ENCODE measurements at regions of chr7 and their contacts with region 1.

Region 1: GRCh38 chr7:17769918-17770317 is 170.4 kb downstream of the SNX13 start:
- DNase-seq: peak; percentile 64
- H3K4me3 ChIP-seq: no peak overlapping the region
- H3K27ac ChIP-seq: no peak overlapping the region
- H3K4me1 ChIP-seq: no peaks in the 10 kb centered on the region
- H3K27me3 ChIP-seq: no peaks in the 10 kb centered on the region
- CTCF ChIP-seq: peak; percentile 71 to 75
- POLR2A ChIP-seq: no peak

Region 2: DNA sequence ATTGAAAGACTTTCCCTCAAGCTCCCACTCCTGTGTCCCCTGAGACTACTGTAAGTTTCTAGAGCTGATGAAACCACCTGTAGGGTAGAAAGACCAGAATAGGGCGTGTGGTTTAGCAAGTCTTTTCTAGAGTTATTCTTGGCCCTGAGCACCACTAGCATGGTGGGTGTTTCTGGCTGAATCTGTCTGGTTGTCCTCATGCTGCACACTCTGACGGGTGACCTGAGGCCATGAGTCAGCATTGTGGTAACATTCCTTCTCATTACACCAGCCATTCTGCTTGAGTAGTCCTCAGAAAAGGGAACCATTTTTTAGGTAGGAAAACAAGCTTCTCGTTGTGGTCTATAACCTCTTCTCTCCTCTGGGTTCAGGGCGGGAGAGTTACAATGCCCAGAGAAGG is 79.9 kb before region 1 on chr7:
- CTCF ChIA-PET with region 1: no interaction called
- POLR2A ChIA-PET with region 1: no interaction called
- dilution Hi-C with region 1: no loop called
- intact Hi-C with region 1: no loop called
- DNase-seq: no peak
- H3K4me3 ChIP-seq: no peak overlapping the region
- H3K27ac ChIP-seq: no peak overlapping the region
- H3K4me1 ChIP-seq: no peaks in the 10 kb centered on the region
- H3K27me3 ChIP-seq: no peaks in the 10 kb centered on the region
- CTCF ChIP-seq: no peak
- POLR2A ChIP-seq: no peak

Region 3: DNA sequence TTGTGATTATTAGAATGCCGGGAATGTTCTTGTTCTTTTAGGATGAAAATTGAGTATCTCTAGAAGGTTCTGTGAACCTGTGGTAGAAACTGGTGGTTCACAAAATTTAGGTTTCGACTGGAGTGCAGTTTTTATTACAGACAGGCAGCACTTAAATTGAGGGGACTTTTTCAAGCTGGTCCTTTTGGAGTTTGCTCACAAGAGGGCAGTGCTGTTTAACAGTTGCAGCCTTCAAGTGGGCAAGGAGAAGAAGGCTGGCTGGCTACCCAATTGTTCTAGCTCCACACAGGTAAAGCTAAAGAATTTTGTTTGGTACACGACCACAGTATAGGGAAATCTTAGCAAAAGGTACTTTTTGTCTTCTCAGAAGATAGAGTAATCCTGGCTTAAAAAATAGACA is 63.2 kb before region 1 on chr7:
- CTCF ChIA-PET with region 1: interaction called, 27 read pairs
- POLR2A ChIA-PET with region 1: no interaction called
- dilution Hi-C with region 1: no loop called
- intact Hi-C with region 1: loop called (anchors 1 kb)
- DNase-seq: peak; percentile 74
- H3K4me3 ChIP-seq: no peak overlapping the region
- H3K27ac ChIP-seq: no peak overlapping the region
- H3K4me1 ChIP-seq: no peaks in the 10 kb centered on the region
- H3K27me3 ChIP-seq: peaks cover 3 to 6% of the 10 kb centered on the region in 2 experiments
- CTCF ChIP-seq: peak; percentile 48 to 64
- POLR2A ChIP-seq: no peak

Region 4: DNA sequence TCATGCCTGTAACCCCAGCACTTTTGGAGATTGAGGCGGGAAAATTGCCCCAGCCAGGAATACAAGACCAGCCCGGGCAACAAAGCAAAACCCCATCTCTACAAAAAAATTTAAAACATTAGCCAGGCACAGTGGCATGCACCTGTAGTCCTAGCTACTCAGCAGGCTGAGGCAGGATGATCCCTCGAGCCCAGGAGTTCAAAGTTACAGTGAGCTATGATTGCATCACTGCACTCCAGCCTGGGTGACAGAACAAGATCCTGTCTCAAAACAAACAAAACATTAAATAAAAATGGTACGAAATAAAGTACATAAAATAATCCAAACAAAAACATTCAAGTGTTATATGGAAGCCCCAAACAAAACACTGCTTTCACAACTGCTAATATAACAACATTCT is 45.4 kb after region 1 on chr7:
- CTCF ChIA-PET with region 1: interaction called, 12 read pairs
- POLR2A ChIA-PET with region 1: no interaction called
- dilution Hi-C with region 1: no loop called
- intact Hi-C with region 1: no loop called
- DNase-seq: no peak
- H3K4me3 ChIP-seq: no peak overlapping the region
- H3K27ac ChIP-seq: no peak overlapping the region
- H3K4me1 ChIP-seq: no peaks in the 10 kb centered on the region
- H3K27me3 ChIP-seq: no peaks in the 10 kb centered on the region
- CTCF ChIP-seq: no peak
- POLR2A ChIP-seq: no peak

Region 5: GRCh38 chr7:17946591-17946990 is 176.7 kb after region 1 on chr7:
- CTCF ChIA-PET with region 1: interaction called, 16 read pairs
- POLR2A ChIA-PET with region 1: no interaction called
- dilution Hi-C with region 1: no loop called
- intact Hi-C with region 1: no loop called
- DNase-seq: no peak
- H3K4me3 ChIP-seq: peak overlapping the region in 1 of 3 experiments; percentile 16
- H3K27ac ChIP-seq: no peak overlapping the region
- H3K4me1 ChIP-seq: no peaks in the 10 kb centered on the region
- H3K27me3 ChIP-seq: no peaks in the 10 kb centered on the region
- CTCF ChIP-seq: no peak
- POLR2A ChIP-seq: no peak

Region 6: GRCh38 chr7:18064242-18064838 is 294.4 kb after region 1 on chr7:
- CTCF ChIA-PET with region 1: interaction called, 10 read pairs
- POLR2A ChIA-PET with region 1: no interaction called
- dilution Hi-C with region 1: no loop called
- intact Hi-C with region 1: no loop called
- DNase-seq: peak; percentile 6
- H3K4me3 ChIP-seq: no peak overlapping the region
- H3K27ac ChIP-seq: no peak overlapping the region
- H3K4me1 ChIP-seq: no peaks in the 10 kb centered on the region
- H3K27me3 ChIP-seq: no peaks in the 10 kb centered on the region
- CTCF ChIP-seq: peak; percentile 43 to 49
- POLR2A ChIP-seq: no peak

Region 7: DNA sequence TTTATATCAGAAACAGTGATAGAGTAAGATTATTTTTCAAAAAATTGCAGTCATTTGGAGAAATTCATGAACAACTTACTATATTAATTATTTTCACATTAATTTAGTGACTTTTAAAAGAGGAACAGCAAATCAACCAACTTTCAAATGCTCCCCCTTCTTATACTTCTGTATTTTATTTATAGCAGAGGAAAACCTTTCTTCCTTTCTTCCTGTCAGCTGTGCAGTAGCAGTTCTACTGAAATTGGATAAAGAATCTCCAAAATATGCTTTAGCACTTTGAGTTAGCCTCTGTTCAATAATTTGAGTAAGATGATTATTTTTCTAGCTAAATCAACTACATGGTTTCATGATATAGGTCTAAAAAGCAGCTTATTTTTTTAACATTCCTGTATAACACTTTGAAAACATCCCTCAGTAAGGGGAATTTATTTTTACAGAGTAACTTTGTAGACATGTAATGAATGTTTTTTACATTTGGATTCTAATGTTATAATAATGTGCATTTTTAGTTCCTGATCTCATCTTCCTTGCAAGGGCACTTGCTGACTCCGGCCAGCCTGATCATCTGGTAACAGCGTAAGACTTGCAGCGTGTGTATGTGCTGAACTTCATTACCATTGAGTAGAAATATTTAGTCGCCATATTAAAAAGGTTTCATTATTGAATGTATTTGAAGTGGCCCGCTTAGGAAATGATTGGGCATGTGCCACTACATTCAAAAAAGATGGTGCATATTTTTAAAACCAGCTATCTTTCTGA is 567.3 kb after region 1 on chr7:
- CTCF ChIA-PET with region 1: interaction called, 13 read pairs
- POLR2A ChIA-PET with region 1: no interaction called
- dilution Hi-C with region 1: no loop called
- intact Hi-C with region 1: no loop called
- DNase-seq: no peak
- H3K4me3 ChIP-seq: no peak overlapping the region
- H3K27ac ChIP-seq: no peak overlapping the region
- H3K4me1 ChIP-seq: no peaks in the 10 kb centered on the region
- H3K27me3 ChIP-seq: no peaks in the 10 kb centered on the region
- CTCF ChIP-seq: no peak
- POLR2A ChIP-seq: no peak

Measured in endothelial cell of umbilical vein (primary cell).